AG04449 (cell line): ENCODE measurements at regions of chr12 and their contacts with region 1.

Region 1: DNA sequence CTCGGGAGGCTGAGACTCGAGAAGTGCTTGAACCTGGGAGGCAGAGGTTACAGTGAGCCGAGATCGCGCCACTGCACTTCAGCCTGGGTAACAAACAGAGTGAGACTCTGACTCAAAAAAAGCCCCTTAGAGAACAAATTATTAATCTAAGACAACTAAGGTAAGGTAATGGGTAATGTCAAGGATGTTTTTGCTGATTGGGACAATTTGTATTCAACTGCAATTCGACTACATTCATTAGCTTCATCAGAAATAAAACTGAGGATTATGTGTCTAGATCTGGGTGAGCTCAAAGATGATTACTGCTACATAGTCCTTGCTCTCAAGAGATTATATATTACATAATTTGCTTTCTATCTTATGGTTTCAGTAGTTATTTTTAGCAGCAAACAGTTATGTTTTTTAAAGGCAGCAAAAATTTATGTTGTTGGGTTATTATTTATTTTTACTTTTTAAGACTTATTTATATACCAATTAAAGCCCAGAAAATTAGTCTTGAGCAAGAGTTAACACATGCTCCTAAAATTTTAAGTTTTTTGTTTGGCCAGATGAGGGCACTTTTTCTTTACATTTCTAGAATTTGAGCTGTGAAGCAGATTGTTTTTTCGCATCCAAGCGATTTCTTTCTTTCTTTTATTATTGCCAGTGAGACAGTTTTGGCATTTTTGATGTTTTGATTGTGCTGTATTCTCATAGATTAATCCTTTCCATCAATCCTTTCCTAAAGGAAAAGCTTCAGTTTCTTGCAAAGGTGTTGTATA is 52.3 kb downstream of the PLEKHA5 start:
- DNase-seq: no peak
- H3K4me3 ChIP-seq: no peak overlapping the region
- CTCF ChIP-seq: no peak

Region 2: DNA sequence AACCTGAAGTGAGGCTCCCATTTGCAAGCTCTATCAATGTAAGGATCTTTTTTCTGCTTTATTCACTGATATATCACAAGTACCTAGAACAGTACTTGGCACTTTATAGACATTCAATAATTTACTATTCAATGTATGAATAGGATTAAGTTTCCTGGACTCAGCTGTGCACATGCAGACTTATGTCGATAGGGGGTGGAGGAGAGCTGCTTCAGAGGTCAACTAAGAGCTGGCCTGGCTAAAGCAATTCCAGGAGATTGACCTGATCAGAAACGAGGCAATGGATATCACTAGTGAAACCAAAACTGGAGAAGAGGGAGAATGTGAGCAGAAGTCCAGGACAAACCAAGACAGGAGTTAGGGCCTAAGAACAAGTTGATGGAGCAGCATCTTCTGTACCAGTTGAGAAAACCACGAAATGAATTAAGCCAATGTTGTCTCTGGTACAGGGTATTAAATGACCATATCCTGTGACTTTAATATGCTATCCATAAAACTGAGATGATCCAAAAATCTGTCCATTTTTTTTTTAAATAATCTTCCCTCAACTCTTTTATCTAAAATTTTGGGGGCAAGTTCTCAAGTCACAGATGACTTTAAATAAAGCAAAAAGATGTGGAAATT is 751.3 kb before region 1 on chr12:
- CTCF ChIA-PET with region 1: interaction called, 32 read pairs
- POLR2A ChIA-PET with region 1: no interaction called
- DNase-seq: peak; percentile 19
- H3K4me3 ChIP-seq: no peak overlapping the region
- CTCF ChIP-seq: peak; percentile 77

Region 3: DNA sequence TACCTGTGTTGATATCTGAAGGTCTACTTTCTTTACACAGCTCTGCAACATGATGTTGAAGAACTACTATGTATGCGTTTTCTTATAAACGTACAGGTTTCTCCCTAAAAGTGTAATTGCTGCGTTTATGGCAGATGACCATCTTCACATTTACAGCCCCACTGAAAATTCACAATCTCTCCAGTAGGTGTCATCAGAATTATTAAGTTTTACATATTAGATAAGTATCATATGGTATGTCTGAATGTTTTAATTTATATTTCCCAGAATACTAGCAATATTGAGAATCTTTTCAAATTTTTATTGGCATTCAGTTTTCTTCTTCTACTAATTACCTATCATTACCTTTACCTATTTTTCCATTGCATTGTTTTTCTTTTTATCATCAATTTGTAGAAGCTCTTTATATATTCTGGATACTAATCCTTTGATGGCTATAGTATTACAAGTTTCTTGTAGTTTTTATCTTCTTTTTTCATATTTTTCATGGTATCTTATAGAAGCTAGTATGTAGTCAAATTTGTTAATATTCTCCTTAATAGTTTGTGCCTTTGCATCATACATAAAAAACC is 320.5 kb before region 1 on chr12:
- CTCF ChIA-PET with region 1: interaction called, 20 read pairs
- POLR2A ChIA-PET with region 1: no interaction called
- DNase-seq: no peak
- H3K4me3 ChIP-seq: no peak overlapping the region
- CTCF ChIP-seq: peak; percentile 12

Region 4: GRCh38 chr12:19018302-19018970 is 163.4 kb before region 1 on chr12:
- CTCF ChIA-PET with region 1: no interaction called
- POLR2A ChIA-PET with region 1: no interaction called
- DNase-seq: peak; percentile 59
- H3K4me3 ChIP-seq: no peak overlapping the region
- CTCF ChIP-seq: no peak

Region 5: DNA sequence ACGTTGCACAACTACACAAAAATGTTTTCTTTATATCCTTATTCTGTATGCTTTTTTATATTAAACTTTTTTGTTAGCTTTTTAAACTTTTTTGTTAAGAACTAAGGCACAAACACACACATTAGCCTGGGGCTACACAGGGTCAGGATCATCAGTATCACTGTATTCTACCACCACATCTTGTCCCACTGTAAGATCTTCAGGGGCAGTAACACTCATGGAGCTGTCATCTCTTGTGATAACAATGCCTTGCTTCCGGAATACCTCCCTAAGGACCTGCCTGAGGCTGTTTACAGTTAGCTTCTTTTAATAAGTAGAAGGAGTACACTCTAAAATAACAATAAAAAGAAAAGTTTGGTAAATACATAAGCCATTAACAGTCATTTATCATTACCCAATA is 10.1 kb before region 1 on chr12:
- CTCF ChIA-PET with region 1: interaction called, 22 read pairs
- POLR2A ChIA-PET with region 1: no interaction called
- DNase-seq: no peak
- H3K4me3 ChIP-seq: no peak overlapping the region
- CTCF ChIP-seq: no peak

Region 6: DNA sequence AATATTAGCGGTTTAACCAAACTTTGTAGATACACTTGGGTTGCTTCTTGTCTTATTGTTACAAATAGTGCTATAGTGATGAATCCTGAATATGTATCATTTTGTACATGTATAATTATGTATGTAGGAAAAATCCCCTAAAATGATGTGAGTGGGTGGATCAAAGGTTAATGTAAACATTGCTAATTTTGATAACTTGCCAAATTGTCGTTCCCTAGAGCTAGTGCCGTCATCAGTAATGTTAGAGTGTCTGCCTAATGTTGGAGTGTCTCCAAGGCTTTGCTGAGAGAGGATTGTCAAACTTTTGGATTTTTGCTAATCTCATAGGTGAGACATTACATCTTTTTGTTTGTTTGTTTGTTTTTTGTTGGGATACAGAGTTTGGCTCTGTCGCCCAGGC is 301.9 kb after region 1 on chr12:
- CTCF ChIA-PET with region 1: no interaction called
- POLR2A ChIA-PET with region 1: no interaction called
- DNase-seq: no peak
- H3K4me3 ChIP-seq: no peak overlapping the region
- CTCF ChIP-seq: no peak